K562 (cell line): ENCODE measurements at regions of chr1 and their contacts with region 1.

Region 1: GRCh38 chr1:206143537-206144172 is 26.5 kb upstream of the AVPR1B start:
- DNase-seq: no peak
- ATAC-seq: no peak
- H3K4me3 ChIP-seq: no peak overlapping the region
- H3K27ac ChIP-seq: no peak overlapping the region
- H3K4me1 ChIP-seq: no peaks in the 10 kb centered on the region
- H3K27me3 ChIP-seq: peaks cover 49 to 53% of the 10 kb centered on the region in 2 experiments
- CTCF ChIP-seq: no peak
- EP300 ChIP-seq: no peak
- POLR2A ChIP-seq: no peak
- RAD21 ChIP-seq: no peak

Region 2: GRCh38 chr1:205983925-205984725 is 159.5 kb before region 1 on chr1:
- CTCF ChIA-PET with region 1: no interaction called
- POLR2A ChIA-PET with region 1: no interaction called
- in situ Hi-C with region 1: no loop called
- intact Hi-C with region 1: no loop called
- DNase-seq: peak; percentile 62 to 72 (median 70)
- ATAC-seq: peak; percentile 97
- H3K4me3 ChIP-seq: no peak overlapping the region
- H3K27ac ChIP-seq: no peak overlapping the region
- H3K4me1 ChIP-seq: no peaks in the 10 kb centered on the region; a peak in 1 of 5 replicates
- H3K27me3 ChIP-seq: peaks cover 8 to 44% of the 10 kb centered on the region in 2 experiments; a peak in 4 of 5 replicates
- CTCF ChIP-seq: peak; percentile 87 to 93 (median 91)
- EP300 ChIP-seq: no peak
- POLR2A ChIP-seq: no peak
- RAD21 ChIP-seq: peak; percentile 85 to 88

Region 3: GRCh38 chr1:206128196-206128595 is 15.5 kb before region 1 on chr1:
- CTCF ChIA-PET with region 1: no interaction called
- POLR2A ChIA-PET with region 1: interaction called, 12 read pairs
- in situ Hi-C with region 1: no loop called
- intact Hi-C with region 1: no loop called
- DNase-seq: no peak
- ATAC-seq: no peak
- H3K4me3 ChIP-seq: no peak overlapping the region
- H3K27ac ChIP-seq: no peak overlapping the region
- H3K4me1 ChIP-seq: no peaks in the 10 kb centered on the region
- H3K27me3 ChIP-seq: peaks cover 20 to 49% of the 10 kb centered on the region in 2 experiments
- CTCF ChIP-seq: no peak
- EP300 ChIP-seq: no peak
- POLR2A ChIP-seq: no peak
- RAD21 ChIP-seq: no peak